ENCODE measurements at regions of chr1 and their contacts with region 1.

Region 1: GRCh38 chr1:59699227-59699847 is 115.4 kb upstream of the HOOK1 start:
- DNase-seq: peak in 1 of 5 donors; percentile 34
- H3K4me3 ChIP-seq: no peak overlapping the region
- H3K27ac ChIP-seq: no peak overlapping the region
- H3K4me1 ChIP-seq: peaks cover 3% of the 10 kb centered on the region
- H3K27me3 ChIP-seq: no peaks in the 10 kb centered on the region
- CTCF ChIP-seq: peak; percentile 75 to 92 (median 86)
- EP300 ChIP-seq: no peak
- POLR2A ChIP-seq: no peak

Region 2: GRCh38 chr1:59163268-59164092 is 535.9 kb before region 1 on chr1:
- intact Hi-C with region 1: loop called in 1 of 4 experiments (anchors 10 kb)
- DNase-seq: no peak
- H3K4me3 ChIP-seq: no peak overlapping the region
- H3K27ac ChIP-seq: no peak overlapping the region
- H3K4me1 ChIP-seq: no peaks in the 10 kb centered on the region
- H3K27me3 ChIP-seq: no peaks in the 10 kb centered on the region
- CTCF ChIP-seq: no peak
- EP300 ChIP-seq: no peak
- POLR2A ChIP-seq: no peak

Region 3: DNA sequence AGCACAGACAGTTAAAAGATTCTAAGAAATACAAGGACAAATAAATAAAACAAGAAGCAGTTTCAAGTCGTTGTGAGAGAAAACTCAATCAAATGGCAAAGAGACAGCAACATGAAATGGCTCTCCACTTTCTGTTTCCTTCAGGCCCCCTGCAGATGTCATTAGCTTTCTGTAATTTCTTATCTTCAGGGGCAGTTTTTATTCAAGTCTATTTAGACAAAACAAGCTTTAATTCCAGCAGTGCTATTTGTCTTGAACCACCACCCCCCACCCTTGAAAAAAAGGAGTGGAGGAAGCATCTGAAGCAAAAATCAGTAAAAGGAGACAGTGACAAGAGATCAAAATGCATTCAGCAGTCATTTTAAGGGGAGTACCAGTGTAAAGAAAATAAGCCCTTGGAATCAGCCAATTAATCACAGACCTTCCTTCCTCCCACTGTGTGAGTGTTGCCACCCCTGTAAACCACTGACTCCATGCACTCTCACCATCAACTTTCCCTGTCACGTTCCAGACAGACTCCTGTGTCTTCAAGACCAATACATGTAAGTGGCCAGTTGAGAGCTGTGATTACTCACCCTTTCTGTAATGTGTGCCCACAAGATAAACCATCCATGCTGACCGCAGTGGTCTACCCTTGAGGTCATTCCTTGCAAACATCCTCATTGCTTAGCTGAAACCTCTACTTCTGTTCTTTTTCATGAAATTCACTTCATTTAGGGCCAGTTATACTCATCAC is 20.7 kb before region 1 on chr1:
- intact Hi-C with region 1: no loop called
- DNase-seq: no peak
- H3K4me3 ChIP-seq: no peak overlapping the region
- H3K27ac ChIP-seq: no peak overlapping the region
- H3K4me1 ChIP-seq: peaks cover 23% of the 10 kb centered on the region
- H3K27me3 ChIP-seq: no peaks in the 10 kb centered on the region
- CTCF ChIP-seq: no peak
- EP300 ChIP-seq: no peak
- POLR2A ChIP-seq: no peak